HepG2 (cell line): ENCODE measurements at regions of chr1 and their contacts with region 1.

Region 1: DNA sequence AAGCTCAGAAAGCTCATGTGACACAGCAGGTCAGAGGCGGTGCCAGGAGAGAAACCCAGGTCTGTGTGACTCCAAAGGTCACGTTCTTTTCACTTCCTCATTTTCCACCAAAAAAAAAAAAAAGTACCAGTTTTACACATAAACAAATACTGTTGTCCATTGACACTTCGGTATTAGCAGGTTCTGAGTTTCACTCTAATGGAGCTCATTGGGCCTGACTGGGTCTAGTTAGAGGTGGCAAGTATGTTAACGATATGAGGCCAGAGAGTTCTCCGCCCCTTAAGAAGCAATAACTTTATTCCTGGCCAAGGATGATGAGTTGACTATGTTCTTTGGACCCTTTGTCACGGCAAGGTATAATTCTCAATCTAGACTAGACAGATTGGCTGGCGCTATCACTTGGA is 30.0 kb upstream of the SDE2 start:
- DNase-seq: peak; percentile 63
- ATAC-seq: peak; percentile 77
- H3K4me3 ChIP-seq: peak overlapping the region in 2 of 3 experiments; percentile 5 to 6; a peak in 2 of 6 replicates
- H3K27ac ChIP-seq: no peak overlapping the region
- H3K4me1 ChIP-seq: peaks cover 27% of the 10 kb centered on the region
- H3K27me3 ChIP-seq: peaks cover 1 to 5% of the 10 kb centered on the region in 2 experiments; a peak in 1 of 5 replicates
- CTCF ChIP-seq: no peak
- EP300 ChIP-seq: no peak
- POLR2A ChIP-seq: no peak
- RAD21 ChIP-seq: no peak

Region 2: DNA sequence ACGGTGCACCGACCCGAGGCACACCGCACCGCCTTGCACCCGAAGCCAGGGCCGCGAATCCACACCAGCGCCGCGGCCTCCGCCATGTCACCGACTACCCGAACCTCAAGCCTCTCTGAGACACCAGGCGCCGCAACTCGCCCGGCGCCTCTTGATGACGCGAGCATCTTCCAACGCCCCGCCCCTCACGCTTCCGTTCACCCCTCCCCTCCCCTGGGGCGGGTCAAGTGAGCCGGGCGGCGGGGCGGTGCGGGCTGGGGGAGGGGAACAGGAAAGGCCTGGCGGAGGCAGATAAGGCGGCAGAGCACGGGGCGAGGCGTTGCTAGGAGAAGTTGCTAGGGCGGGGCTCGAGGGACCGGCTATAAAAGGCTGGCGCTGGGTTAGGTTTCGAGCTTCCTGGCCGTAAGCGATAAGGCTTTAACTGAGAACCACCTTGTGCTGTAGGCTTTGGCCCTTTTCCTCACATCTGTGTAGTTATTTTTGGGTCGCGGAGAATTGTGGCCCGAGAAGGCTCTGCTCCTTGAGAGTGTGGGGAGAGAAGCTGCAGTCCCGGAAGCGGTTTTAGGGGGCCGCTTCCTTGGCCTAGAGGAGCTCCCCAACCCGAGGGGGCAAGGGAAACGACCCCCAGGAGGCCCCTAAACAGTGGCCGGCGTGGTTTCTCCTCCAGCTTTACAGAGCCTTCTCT is 29.7 kb before region 1 on chr1 and contains the start of gene SDE2:
- CTCF ChIA-PET with region 1: no interaction called
- POLR2A ChIA-PET with region 1: interaction called, 23 read pairs
- in situ Hi-C with region 1: no loop called
- intact Hi-C with region 1: no loop called
- DNase-seq: peak; percentile 95
- ATAC-seq: peak; percentile 93
- H3K4me3 ChIP-seq: peak within 1 kb of the TSS; percentile 74 to 88 (median 86)
- H3K27ac ChIP-seq: peak within 1 kb of the TSS; percentile 76
- H3K4me1 ChIP-seq: peaks cover 66% of the 10 kb centered on the region
- H3K27me3 ChIP-seq: no peaks in the 10 kb centered on the region; a peak in 1 of 5 replicates
- CTCF ChIP-seq: no peak
- EP300 ChIP-seq: no peak
- POLR2A ChIP-seq: peak; percentile 94 to 99
- RAD21 ChIP-seq: no peak
- total RNA-seq, gene SDE2: 19.6 and 24.7 TPM in 2 replicates

Region 3: GRCh38 chr1:226046240-226046639 is 17.1 kb after region 1 on chr1:
- CTCF ChIA-PET with region 1: no interaction called
- POLR2A ChIA-PET with region 1: no interaction called
- in situ Hi-C with region 1: no loop called
- intact Hi-C with region 1: loop called (anchors 2 kb)
- DNase-seq: peak; percentile 73
- ATAC-seq: peak; percentile 91
- H3K4me3 ChIP-seq: no peak overlapping the region
- H3K27ac ChIP-seq: no peak overlapping the region
- H3K4me1 ChIP-seq: peaks cover 23% of the 10 kb centered on the region
- H3K27me3 ChIP-seq: no peaks in the 10 kb centered on the region
- CTCF ChIP-seq: no peak
- EP300 ChIP-seq: no peak
- POLR2A ChIP-seq: no peak
- RAD21 ChIP-seq: no peak